ENCODE measurements at regions of chr11 and their contacts with region 1.

Region 1: DNA sequence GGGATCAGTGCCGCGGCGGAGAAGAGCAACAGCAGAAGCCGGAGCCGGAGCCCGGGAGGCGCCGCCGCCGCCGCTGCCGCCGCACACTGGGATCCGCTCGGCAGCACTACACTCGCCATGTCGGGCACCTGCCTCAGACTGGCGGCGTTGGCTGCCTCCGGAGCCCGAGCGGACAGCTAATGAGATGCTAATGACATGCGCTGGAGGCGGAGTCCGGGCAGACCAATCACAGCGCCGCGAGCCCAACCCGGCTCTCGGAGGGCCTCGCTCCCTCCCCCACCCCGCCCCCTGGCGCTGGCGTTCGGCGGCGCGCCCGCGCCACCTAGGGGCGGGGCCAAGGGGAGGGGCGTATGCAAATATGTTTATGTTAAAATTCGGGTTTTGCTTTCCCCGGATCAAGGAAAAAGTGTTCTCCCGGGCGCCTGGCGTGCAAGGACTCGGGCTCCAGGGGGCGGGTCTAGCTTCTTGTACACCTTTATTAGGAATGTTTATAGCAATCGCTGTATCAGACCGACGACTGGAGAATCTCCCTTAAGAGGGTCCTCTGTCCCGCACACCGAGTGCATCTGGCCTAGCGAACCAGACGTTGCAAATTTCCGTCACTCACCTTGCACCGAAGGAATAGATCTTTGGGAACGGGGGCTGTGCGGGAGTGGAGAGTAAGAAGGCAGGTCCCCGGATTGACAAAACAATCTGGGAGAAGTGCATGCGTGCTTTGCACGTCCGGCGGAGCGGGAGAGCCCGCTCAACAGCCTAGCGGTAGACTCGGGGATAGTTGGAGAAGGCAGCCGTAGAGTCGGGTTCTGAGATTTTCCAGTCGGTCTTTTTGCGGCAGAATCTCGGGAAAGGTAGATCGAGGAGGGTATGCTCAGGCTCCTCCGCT is at the start of gene CADM1:
- DNase-seq: peak; percentile 95
- ATAC-seq: peak; percentile 93
- H3K4me3 ChIP-seq: peak within 1 kb of the TSS; percentile 60
- H3K27ac ChIP-seq: peak within 1 kb of the TSS; percentile 22
- H3K4me1 ChIP-seq: 0 out of 2 replicates have a peak, but pooled peaks cover 2% of the 10 kb centered on the region
- H3K27me3 ChIP-seq: peaks cover 13% of the 10 kb centered on the region
- CTCF ChIP-seq: peak; percentile 80
- POLR2A ChIP-seq: peak; percentile 97
- RAD21 ChIP-seq: peak; percentile 72
- total RNA-seq, gene CADM1: 62.2 and 77.1 TPM in 2 replicates

Region 2: GRCh38 chr11:114295676-114296604 is 1208.6 kb before region 1 on chr11 and contains the start of gene NNMT:
- CTCF ChIA-PET with region 1: no interaction called
- POLR2A ChIA-PET with region 1: no interaction called
- dilution Hi-C with region 1: no loop called
- in situ Hi-C with region 1: no loop called
- intact Hi-C with region 1: loop called (anchors 10 kb)
- DNase-seq: peak; percentile 97
- ATAC-seq: peak; percentile 73
- H3K4me3 ChIP-seq: peak within 1 kb of the TSS; percentile 62
- H3K27ac ChIP-seq: peak within 1 kb of the TSS; percentile 98
- H3K4me1 ChIP-seq: peaks cover 18% of the 10 kb centered on the region
- H3K27me3 ChIP-seq: no peaks in the 10 kb centered on the region
- CTCF ChIP-seq: 0 out of 2 replicates have a peak, but pooled peaks have one; percentile 2
- POLR2A ChIP-seq: peak; percentile 85
- RAD21 ChIP-seq: no peak; the same call in none of the 2 replicates
- total RNA-seq, gene NNMT: 74.7 and 108 TPM in 2 replicates

Region 3: DNA sequence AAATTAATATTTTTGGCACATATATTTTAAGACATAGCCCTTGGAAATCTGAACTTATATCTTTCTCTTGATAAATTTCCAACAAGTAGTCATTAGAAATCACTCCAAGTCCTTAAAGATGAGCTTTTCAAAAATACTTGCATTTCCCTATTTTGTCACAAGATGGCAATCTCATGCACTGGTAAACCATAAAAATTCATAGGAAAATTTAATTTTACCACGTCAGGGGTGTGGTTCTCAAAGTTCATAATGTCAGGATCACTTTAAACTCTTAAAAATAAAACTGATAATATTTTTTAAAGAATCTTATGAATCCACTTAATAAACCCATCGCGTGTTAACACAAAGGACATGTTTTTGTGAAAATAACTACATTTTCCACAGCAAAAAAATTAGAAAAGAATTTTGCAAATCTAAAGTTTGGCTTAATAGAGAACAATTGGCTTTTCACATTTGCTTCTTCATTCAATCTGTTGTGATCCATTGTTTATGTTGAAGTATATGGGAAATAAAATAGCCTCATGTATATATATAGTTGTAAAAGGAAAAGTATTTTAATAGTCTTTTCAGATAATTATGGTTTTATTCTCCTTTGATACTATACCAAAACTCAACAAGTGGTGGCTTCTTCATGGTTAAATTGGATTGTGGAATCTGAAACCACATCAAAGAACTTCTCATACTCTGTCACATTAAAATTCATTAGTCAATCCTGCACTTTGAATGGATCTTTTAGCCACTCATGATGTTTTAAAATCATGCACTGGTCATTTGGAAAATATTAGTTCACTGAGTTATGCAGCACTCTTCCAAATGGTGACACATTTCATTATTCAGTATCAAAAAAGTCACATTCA is 169.4 kb before region 1 on chr11:
- CTCF ChIA-PET with region 1: interaction called, 6 read pairs
- POLR2A ChIA-PET with region 1: no interaction called
- dilution Hi-C with region 1: no loop called
- in situ Hi-C with region 1: loop called (anchors 5 kb)
- intact Hi-C with region 1: loop called (anchors 1 kb)
- DNase-seq: peak; percentile 52
- ATAC-seq: peak; percentile 57
- H3K4me3 ChIP-seq: no peak overlapping the region
- H3K27ac ChIP-seq: no peak overlapping the region
- H3K4me1 ChIP-seq: no peaks in the 10 kb centered on the region
- H3K27me3 ChIP-seq: no peaks in the 10 kb centered on the region
- CTCF ChIP-seq: peak; percentile 73
- POLR2A ChIP-seq: no peak
- RAD21 ChIP-seq: peak; percentile 76

Region 4: GRCh38 chr11:115366826-115367225 is 137.7 kb before region 1 on chr11:
- CTCF ChIA-PET with region 1: no interaction called
- POLR2A ChIA-PET with region 1: no interaction called
- dilution Hi-C with region 1: no loop called
- in situ Hi-C with region 1: no loop called
- intact Hi-C with region 1: no loop called
- DNase-seq: no peak
- ATAC-seq: no peak
- H3K4me3 ChIP-seq: no peak overlapping the region
- H3K27ac ChIP-seq: no peak overlapping the region
- H3K4me1 ChIP-seq: no peaks in the 10 kb centered on the region
- H3K27me3 ChIP-seq: no peaks in the 10 kb centered on the region
- CTCF ChIP-seq: no peak
- POLR2A ChIP-seq: no peak
- RAD21 ChIP-seq: no peak

Region 5: DNA sequence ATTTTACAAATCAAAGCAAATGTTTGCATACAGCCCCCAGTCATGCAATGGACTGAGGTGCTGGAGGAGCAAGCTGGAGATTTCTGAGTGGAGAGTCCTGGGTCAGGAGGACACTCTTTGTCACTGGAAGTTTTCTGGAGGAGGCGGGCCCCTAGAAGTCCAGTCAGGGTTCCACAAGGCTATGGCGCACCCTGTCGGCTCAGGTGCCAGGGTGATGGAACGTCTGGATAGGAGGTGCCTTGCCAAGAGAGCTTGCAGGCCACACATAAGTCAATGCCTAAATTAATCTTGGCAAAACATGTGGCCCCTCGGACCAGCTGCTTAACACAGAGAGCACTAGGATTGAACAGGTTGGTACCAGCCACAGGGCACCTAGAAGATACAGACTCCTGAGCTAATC is 174.4 kb after region 1 on chr11:
- CTCF ChIA-PET with region 1: no interaction called
- POLR2A ChIA-PET with region 1: no interaction called
- dilution Hi-C with region 1: no loop called
- in situ Hi-C with region 1: no loop called
- intact Hi-C with region 1: loop called (anchors 5 kb)
- DNase-seq: no peak
- ATAC-seq: no peak
- H3K4me3 ChIP-seq: no peak overlapping the region
- H3K27ac ChIP-seq: no peak overlapping the region
- H3K4me1 ChIP-seq: peaks cover 19% of the 10 kb centered on the region
- H3K27me3 ChIP-seq: no peaks in the 10 kb centered on the region
- CTCF ChIP-seq: no peak
- POLR2A ChIP-seq: no peak
- RAD21 ChIP-seq: no peak

Region 6: GRCh38 chr11:116078101-116078591 is 573.6 kb after region 1 on chr11:
- CTCF ChIA-PET with region 1: no interaction called
- POLR2A ChIA-PET with region 1: no interaction called
- dilution Hi-C with region 1: no loop called
- in situ Hi-C with region 1: no loop called
- intact Hi-C with region 1: loop called (anchors 5 kb)
- DNase-seq: peak; percentile 20
- ATAC-seq: peak; percentile 49; the same call in 1 of the 2 replicates
- H3K4me3 ChIP-seq: no peak overlapping the region
- H3K27ac ChIP-seq: no peak overlapping the region
- H3K4me1 ChIP-seq: no peaks in the 10 kb centered on the region
- H3K27me3 ChIP-seq: no peaks in the 10 kb centered on the region; the same call in 1 of the 2 replicates
- CTCF ChIP-seq: peak; percentile 52
- POLR2A ChIP-seq: no peak
- RAD21 ChIP-seq: peak; percentile 63

Region 7: GRCh38 chr11:116224154-116224888 is 719.8 kb after region 1 on chr11:
- CTCF ChIA-PET with region 1: no interaction called
- POLR2A ChIA-PET with region 1: no interaction called
- dilution Hi-C with region 1: no loop called
- in situ Hi-C with region 1: no loop called
- intact Hi-C with region 1: loop called (anchors 10 kb)
- DNase-seq: peak; percentile 22
- ATAC-seq: peak; percentile 87
- H3K4me3 ChIP-seq: no peak overlapping the region
- H3K27ac ChIP-seq: no peak overlapping the region
- H3K4me1 ChIP-seq: no peaks in the 10 kb centered on the region
- H3K27me3 ChIP-seq: no peaks in the 10 kb centered on the region
- CTCF ChIP-seq: peak; percentile 60
- POLR2A ChIP-seq: no peak
- RAD21 ChIP-seq: peak; percentile 53

Measured in IMR-90 (cell line).